Heart right ventricle (tissue), 16 donors: ENCODE measurements at regions of chr12 and their contacts with region 1.

Region 1: DNA sequence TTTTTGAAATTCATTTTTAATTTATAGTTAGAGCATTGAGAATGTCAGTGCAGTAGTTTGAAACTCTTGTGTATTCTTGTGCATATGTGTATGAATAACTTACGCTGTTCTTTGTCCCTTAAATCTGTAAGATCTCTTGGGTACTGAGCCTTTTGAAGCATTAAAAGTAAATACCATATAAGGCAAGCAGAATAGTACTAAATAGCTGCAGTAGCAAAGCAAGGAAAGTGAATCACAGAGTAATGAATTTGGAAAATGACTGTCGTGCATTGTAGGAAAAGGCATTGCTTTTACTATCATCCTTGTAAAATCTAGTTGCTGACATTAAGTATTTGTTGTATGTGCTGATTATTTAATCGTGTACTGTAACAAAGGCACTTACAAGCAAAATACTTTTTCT is 12.1 kb downstream of the CNOT2 start:
- DNase-seq: no peak
- ATAC-seq: peak in 1 of 8 donors; percentile 41
- H3K4me3 ChIP-seq: no peak overlapping the region
- H3K27ac ChIP-seq: peak overlapping the region in 1 of 10 donors; percentile 0
- H3K4me1 ChIP-seq: peaks cover 0 to 64% (median 43%) of the 10 kb centered on the region in 9 donors
- H3K27me3 ChIP-seq: no peaks in the 10 kb centered on the region
- CTCF ChIP-seq: no peak

Region 2: DNA sequence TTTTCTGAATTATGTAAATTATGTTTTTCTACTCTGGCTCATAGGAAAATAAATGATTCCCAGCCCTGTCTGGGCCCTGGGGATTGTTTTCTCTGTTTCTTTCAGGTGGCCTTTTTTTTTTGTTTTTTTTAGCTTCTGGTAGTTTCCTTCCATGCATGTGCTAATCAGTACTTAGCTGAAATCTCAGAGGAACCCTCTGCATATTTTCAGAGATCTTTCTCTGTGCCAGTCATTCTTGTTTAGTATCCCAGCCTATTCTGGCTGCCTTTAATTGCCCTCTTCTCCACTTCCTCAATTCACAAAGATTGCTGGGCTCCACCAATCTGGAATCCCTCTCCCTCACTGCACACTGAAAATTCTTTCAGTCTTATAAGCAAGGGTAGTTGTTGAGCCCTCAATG is 34.8 kb after region 1 on chr12:
- intact Hi-C with region 1: no loop called
- DNase-seq: no peak
- ATAC-seq: no peak
- H3K4me3 ChIP-seq: no peak overlapping the region
- H3K27ac ChIP-seq: peak overlapping the region in 2 of 10 donors; percentile 8 to 17
- H3K4me1 ChIP-seq: peaks cover 0 to 24% (median 10%) of the 10 kb centered on the region in 9 donors
- H3K27me3 ChIP-seq: no peaks in the 10 kb centered on the region
- CTCF ChIP-seq: no peak

Region 3: DNA sequence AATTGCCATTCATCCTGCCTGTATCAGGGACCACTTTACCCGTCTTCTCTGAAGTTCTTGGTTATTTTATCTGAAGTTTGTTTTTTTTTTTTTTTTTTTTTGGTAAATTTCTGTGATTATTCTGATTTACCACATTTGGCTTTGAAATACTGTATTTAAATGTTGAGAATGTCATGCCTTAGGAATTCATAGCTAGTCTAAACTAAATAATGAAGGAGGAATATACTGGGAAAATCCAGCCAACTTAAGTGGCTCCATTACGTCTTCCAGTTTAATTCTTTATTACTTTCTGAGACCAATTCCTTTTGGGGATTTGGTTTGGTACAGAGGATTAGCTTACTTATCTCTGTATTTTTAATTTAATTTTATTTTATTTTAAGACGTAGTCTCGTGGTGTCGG is 50.5 kb after region 1 on chr12:
- intact Hi-C with region 1: loop called in 1 of 10 experiments (anchors 10 kb)
- DNase-seq: no peak
- ATAC-seq: no peak
- H3K4me3 ChIP-seq: no peak overlapping the region
- H3K27ac ChIP-seq: no peak overlapping the region
- H3K4me1 ChIP-seq: peaks cover 0 to 15% (median 0%) of the 10 kb centered on the region in 9 donors
- H3K27me3 ChIP-seq: no peaks in the 10 kb centered on the region
- CTCF ChIP-seq: no peak